ENCODE measurements at regions of chr1 and their contacts with region 1.

Region 1: DNA sequence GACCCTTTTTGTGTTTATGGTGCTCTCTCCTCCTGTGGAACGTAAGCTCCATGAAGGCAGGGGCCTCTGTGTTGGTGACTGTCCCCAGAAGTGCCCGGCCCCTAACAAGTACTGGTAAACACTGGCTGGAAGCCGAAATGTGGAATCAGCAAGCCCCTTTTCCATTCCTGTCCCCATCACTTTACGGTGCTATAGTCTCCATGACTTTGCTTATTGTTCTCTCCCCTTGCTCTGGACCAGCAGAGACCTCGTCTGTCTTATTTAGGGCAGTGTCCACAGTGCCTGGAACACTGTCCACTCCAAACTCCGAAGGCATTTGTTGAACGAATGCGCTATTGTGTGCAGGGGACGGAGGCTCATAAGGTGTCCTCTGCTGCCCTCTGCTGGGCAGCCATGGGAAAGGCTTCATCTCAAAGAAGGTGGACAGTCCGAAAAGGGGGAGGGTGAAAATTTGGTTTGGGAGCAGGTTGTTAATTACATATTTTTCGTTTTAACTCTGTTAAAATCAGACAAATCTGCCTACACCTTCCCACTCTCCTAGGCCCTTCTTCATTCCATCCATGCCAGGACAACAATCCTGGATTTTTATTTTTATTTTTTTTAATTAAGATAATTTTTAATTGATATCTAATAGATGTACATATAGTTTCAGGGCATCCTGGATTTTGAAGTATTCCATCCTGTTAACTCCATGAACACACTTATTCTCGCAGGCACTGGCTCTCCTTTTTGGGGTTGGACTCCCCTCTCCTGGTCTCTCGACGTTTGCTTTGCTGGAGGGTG is 115.6 kb downstream of the PGBD5 start:
- DNase-seq: peak; percentile 96
- ATAC-seq: peak; percentile 60
- H3K4me3 ChIP-seq: no peak overlapping the region
- H3K27ac ChIP-seq: no peak overlapping the region
- H3K4me1 ChIP-seq: peaks cover 19% of the 10 kb centered on the region
- H3K27me3 ChIP-seq: peaks cover 20% of the 10 kb centered on the region; the same call in 1 of the 2 replicates
- CTCF ChIP-seq: peak; percentile 100

Region 2: DNA sequence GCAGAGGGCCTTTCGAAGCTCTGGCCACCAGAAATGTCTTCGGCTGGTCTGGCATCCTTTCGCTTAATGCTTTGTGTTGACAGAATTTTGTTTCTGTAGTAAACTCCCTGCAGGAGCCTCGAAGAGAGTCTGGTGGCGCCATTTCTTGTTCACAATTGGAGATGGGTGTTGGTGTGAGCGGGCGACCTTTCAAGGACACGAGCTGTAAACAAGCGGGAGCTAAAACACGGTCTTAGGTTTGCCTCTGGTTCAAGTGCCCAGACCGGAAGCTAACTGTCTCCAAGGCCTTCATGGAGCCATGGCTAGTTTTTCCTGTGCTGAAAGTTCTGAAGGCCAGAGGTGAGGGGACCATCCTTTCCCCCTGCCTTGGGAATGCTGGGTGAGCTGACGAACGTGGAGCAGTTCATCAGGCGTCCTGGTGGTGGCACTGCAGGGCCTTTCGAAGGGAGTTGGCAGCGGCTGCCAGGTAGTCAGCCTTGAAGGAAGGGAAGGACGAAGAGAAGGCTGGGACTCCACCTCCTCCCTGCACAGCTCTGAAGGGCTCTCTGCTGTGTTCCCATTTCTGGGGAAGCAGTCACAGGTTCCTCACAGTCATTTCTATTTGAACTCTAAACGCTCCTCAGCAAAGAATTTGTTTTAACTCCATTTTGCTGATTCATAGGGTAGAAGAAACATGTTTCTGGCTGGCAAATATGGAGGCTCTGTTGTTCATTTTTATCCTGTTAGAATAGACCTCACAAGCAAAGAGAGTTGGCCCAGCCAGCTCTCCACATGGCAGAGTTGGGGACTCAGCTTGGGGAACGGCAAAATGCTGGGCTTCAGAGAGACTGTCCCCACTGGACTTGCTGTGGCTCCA is 649.3 kb before region 1 on chr1:
- CTCF ChIA-PET with region 1: no interaction called
- POLR2A ChIA-PET with region 1: no interaction called
- intact Hi-C with region 1: loop called (anchors 1 kb)
- DNase-seq: peak; percentile 84
- ATAC-seq: peak; percentile 92
- H3K4me3 ChIP-seq: no peak overlapping the region
- H3K27ac ChIP-seq: no peak overlapping the region
- H3K4me1 ChIP-seq: no peaks in the 10 kb centered on the region
- H3K27me3 ChIP-seq: no peaks in the 10 kb centered on the region
- CTCF ChIP-seq: peak; percentile 91

Region 3: DNA sequence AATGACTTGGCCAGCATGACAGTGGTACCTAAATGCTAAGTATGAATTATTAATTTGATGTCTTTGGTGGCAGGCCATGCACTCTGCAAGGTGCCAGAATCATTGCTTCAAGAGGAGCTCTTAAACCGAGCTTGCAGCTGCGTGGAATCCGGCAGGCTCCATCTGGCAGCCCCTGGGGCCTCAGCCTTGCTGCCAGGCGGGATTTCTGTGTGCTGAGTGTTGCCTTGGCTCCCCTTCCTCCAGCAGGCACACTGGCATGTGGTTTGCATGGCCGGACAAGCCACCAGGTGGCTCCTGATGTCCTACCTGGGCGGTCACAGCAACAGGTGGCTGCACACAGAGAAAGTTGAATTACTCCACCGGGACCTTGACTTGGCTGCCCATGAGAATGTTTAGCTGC is 529.1 kb before region 1 on chr1:
- CTCF ChIA-PET with region 1: no interaction called
- POLR2A ChIA-PET with region 1: no interaction called
- intact Hi-C with region 1: loop called (anchors 1 kb)
- DNase-seq: peak; percentile 47
- ATAC-seq: peak; percentile 63
- H3K4me3 ChIP-seq: no peak overlapping the region
- H3K27ac ChIP-seq: no peak overlapping the region
- H3K4me1 ChIP-seq: no peaks in the 10 kb centered on the region
- H3K27me3 ChIP-seq: peaks cover 95% of the 10 kb centered on the region
- CTCF ChIP-seq: peak; percentile 52; the same call in 1 of the 2 replicates

Region 4: GRCh38 chr1:230066466-230067404 is 243.8 kb before region 1 on chr1 and contains the start of gene GALNT2:
- CTCF ChIA-PET with region 1: no interaction called
- POLR2A ChIA-PET with region 1: no interaction called
- intact Hi-C with region 1: loop called (anchors 1 kb)
- DNase-seq: peak; percentile 98
- ATAC-seq: peak; percentile 86
- H3K4me3 ChIP-seq: peak within 1 kb of the TSS; percentile 84
- H3K27ac ChIP-seq: peak within 1 kb of the TSS; percentile 35
- H3K4me1 ChIP-seq: peaks cover 29% of the 10 kb centered on the region
- H3K27me3 ChIP-seq: no peaks in the 10 kb centered on the region
- CTCF ChIP-seq: no peak
- total RNA-seq, gene GALNT2: 182 and 193 TPM in 2 replicates

Region 5: GRCh38 chr1:230186003-230186863 is 124.3 kb before region 1 on chr1:
- CTCF ChIA-PET with region 1: no interaction called
- POLR2A ChIA-PET with region 1: no interaction called
- intact Hi-C with region 1: loop called (anchors 5 kb)
- DNase-seq: peak; percentile 100
- ATAC-seq: peak; percentile 99
- H3K4me3 ChIP-seq: peak overlapping the region; percentile 43
- H3K27ac ChIP-seq: peak overlapping the region; percentile 65
- H3K4me1 ChIP-seq: peaks cover 23% of the 10 kb centered on the region
- H3K27me3 ChIP-seq: no peaks in the 10 kb centered on the region
- CTCF ChIP-seq: no peak